ENCODE measurements at regions of chr5 and their contacts with region 1.

Region 1: DNA sequence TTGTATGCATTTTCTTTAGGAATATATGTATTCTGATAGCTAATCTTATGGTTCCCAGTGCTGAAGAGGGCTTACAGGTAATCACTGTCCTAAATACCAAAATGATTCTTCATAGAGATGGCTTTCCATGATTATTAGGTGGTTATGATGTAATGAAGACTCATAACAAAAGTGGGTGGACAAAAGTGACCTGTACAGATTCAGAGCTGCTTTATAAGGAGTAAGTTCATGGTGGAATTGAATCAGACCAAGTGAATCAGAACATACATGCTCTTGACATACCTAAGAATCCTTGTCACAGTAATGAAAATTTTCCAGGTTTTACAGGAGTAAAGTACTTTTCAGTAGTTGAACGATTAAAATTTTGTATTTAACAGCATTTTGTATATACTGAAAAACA is 105.6 kb downstream of the NIPBL start:
- DNase-seq: no peak
- ATAC-seq: no peak
- H3K4me3 ChIP-seq: no peak overlapping the region
- H3K4me3 Mint-ChIP-seq: no peak overlapping the region
- H3K27ac ChIP-seq: no peak overlapping the region
- H3K27ac Mint-ChIP-seq: no peak overlapping the region
- H3K4me1 ChIP-seq: peaks cover 0 to 5% of the 10 kb centered on the region in 2 donors
- H3K4me1 Mint-ChIP-seq: peaks cover 7 to 77% (median 49%) of the 10 kb centered on the region in 7 donors
- H3K27me3 ChIP-seq: no peaks in the 10 kb centered on the region
- H3K27me3 Mint-ChIP-seq: no peaks in the 10 kb centered on the region

Region 2: DNA sequence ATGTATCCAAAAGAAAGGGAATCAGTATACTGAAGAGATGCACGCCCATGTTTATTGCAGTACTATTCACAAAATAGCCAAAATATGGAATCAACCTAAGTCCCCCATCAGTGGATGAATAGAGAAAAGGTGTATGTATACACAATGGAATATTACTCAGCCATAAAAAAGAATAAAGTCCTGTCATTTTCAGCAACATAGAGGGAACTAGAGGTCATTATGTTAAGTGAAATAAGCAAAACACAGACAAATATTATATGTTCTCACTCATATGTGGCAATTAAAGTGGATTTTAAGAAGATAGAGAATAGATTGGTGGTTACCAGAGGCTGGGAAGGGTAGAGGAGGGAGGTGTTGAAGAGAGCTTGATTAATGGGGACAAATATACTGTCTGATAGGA is 17.0 kb before region 1 on chr5:
- CTCF ChIA-PET with region 1: no interaction called
- POLR2A ChIA-PET with region 1: no interaction called
- intact Hi-C with region 1: loop called in 1 of 2 experiments (anchors 2 kb)
- DNase-seq: no peak
- ATAC-seq: no peak
- H3K4me3 ChIP-seq: no peak overlapping the region
- H3K4me3 Mint-ChIP-seq: no peak overlapping the region
- H3K27ac ChIP-seq: no peak overlapping the region
- H3K27ac Mint-ChIP-seq: no peak overlapping the region
- H3K4me1 ChIP-seq: no peaks in the 10 kb centered on the region
- H3K4me1 Mint-ChIP-seq: peaks cover 0 to 5% (median 0%) of the 10 kb centered on the region in 7 donors
- H3K27me3 ChIP-seq: no peaks in the 10 kb centered on the region
- H3K27me3 Mint-ChIP-seq: no peaks in the 10 kb centered on the region

Region 3: GRCh38 chr5:37208883-37209797 is 227.0 kb after region 1 on chr5:
- CTCF ChIA-PET with region 1: no interaction called
- POLR2A ChIA-PET with region 1: no interaction called
- intact Hi-C with region 1: no loop called
- DNase-seq: peak in 2 of 9 donors; percentile 15 to 20
- ATAC-seq: peak; percentile 50
- H3K4me3 ChIP-seq: peak overlapping the region; percentile 46
- H3K4me3 Mint-ChIP-seq: peak overlapping the region; percentile 62 to 87 (median 80)
- H3K27ac ChIP-seq: peak overlapping the region; percentile 44
- H3K27ac Mint-ChIP-seq: peak overlapping the region in 7 of 9 donors; percentile 31 to 88 (median 65)
- H3K4me1 ChIP-seq: peaks cover 0 to 1% of the 10 kb centered on the region in 2 donors
- H3K4me1 Mint-ChIP-seq: peaks cover 0 to 11% (median 0%) of the 10 kb centered on the region in 7 donors
- H3K27me3 ChIP-seq: no peaks in the 10 kb centered on the region
- H3K27me3 Mint-ChIP-seq: no peaks in the 10 kb centered on the region

Region 4: DNA sequence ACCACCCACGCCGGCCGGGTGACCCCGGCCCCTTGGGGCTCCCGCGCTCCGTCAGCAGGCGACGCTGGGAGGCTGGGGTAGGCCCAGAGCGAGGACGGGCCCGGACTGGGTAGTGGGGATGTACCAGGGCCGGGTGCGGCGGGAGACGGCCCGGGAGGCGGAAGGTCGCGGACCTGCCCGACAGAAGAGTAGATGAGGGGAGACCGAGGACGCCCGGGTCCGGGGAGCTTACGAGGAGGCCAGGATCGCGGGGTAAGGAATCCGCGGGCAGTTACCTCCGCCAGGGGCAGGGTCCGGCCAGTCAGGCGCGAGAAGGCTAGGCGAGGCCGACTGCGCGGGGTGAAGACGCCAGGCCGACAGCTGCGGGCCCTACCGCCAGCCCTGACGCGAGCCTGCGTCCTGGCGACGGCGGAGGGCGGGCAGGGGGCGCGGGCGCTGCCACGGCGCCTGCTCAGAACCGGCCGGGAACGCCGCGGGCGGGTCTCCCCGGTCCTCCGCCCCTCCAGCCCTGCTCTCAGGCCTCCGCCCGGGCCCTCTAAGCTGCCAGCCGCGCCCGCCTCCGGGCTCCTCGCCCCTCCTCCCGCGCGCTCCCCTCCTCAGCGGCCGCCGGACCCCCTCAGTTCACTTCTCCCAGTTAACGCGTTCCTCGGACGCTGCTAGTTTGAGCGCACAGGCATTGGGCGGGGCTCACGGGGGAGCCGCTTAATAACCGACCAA is 267.0 kb after region 1 on chr5 and contains the start of gene CPLANE1:
- CTCF ChIA-PET with region 1: no interaction called
- POLR2A ChIA-PET with region 1: no interaction called
- intact Hi-C with region 1: no loop called
- DNase-seq: peak; percentile 21 to 73 (median 53)
- ATAC-seq: peak; percentile 87
- H3K4me3 ChIP-seq: peak within 1 kb of the TSS; percentile 75
- H3K4me3 Mint-ChIP-seq: peak within 1 kb of the TSS; percentile 84 to 94 (median 90)
- H3K27ac ChIP-seq: peak within 1 kb of the TSS; percentile 77
- H3K27ac Mint-ChIP-seq: peak within 1 kb of the TSS; percentile 77 to 92 (median 86)
- H3K4me1 ChIP-seq: peaks cover 0 to 6% of the 10 kb centered on the region in 2 donors
- H3K4me1 Mint-ChIP-seq: peaks cover 5 to 30% (median 17%) of the 10 kb centered on the region in 7 donors
- H3K27me3 ChIP-seq: no peaks in the 10 kb centered on the region
- H3K27me3 Mint-ChIP-seq: no peaks in the 10 kb centered on the region
- total RNA-seq, gene CPLANE1: 8.0 to 14.7 (median 10.4) TPM

Measured in naive thymus-derived CD4-positive, alpha-beta T cell (primary cell).